ENCODE measurements at regions of chr5 and their contacts with region 1.

Region 1: DNA sequence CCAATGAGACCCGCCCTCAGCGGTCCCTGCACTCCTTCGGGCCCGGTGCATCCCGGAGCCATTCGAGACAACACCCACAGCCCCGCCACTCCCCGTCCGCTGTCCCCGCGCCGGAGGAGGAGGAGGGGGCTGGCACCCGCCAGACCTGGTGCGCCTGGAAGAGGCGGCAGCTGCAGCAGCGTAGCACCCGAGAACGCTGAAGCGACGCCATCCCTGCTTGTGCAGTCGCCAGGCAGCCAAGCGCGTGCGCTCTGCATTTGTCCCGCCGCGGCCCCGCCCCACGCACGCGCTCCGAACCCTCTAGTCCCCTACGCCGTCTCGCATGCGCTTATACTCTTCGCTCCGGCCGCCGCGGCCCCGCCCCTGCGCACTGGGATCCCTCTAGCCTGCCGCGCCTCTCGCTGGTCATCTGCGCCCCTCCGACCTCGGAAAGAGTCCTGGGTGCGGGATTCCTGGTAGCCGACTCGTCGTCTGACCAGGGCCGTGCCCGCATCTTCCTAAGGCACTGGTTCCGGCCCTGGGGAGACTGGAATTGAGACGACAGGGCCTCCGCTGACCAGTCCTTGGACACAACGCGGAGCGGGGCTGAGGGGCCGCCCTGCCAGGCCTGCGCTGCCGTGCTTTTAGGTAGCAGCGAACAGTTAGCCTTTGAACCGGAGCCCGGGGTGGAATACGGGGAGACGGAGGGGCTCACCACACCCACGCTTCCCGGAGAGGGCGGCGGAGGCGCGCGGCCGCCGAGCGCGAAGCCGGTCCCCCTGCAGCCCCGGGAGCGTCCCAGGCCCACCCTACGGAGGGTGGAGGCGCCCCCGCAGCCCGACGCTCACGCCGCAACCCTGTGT is at the start of gene MRNIP:
- DNase-seq: peak; percentile 97
- H3K4me3 Mint-ChIP-seq: peak within 1 kb of the TSS; percentile 98
- H3K27ac Mint-ChIP-seq: peak within 1 kb of the TSS; percentile 94
- H3K4me1 Mint-ChIP-seq: peaks cover 11% of the 10 kb centered on the region
- H3K27me3 Mint-ChIP-seq: no peaks in the 10 kb centered on the region
- total RNA-seq, gene MRNIP: 27.6 and 27.8 TPM in 2 replicates

Region 2: GRCh38 chr5:179243333-179243732 is 615.5 kb before region 1 on chr5:
- intact Hi-C with region 1: no loop called
- DNase-seq: no peak
- H3K4me3 Mint-ChIP-seq: no peak overlapping the region
- H3K27ac Mint-ChIP-seq: no peak overlapping the region
- H3K4me1 Mint-ChIP-seq: no peaks in the 10 kb centered on the region
- H3K27me3 Mint-ChIP-seq: no peaks in the 10 kb centered on the region

Region 3: DNA sequence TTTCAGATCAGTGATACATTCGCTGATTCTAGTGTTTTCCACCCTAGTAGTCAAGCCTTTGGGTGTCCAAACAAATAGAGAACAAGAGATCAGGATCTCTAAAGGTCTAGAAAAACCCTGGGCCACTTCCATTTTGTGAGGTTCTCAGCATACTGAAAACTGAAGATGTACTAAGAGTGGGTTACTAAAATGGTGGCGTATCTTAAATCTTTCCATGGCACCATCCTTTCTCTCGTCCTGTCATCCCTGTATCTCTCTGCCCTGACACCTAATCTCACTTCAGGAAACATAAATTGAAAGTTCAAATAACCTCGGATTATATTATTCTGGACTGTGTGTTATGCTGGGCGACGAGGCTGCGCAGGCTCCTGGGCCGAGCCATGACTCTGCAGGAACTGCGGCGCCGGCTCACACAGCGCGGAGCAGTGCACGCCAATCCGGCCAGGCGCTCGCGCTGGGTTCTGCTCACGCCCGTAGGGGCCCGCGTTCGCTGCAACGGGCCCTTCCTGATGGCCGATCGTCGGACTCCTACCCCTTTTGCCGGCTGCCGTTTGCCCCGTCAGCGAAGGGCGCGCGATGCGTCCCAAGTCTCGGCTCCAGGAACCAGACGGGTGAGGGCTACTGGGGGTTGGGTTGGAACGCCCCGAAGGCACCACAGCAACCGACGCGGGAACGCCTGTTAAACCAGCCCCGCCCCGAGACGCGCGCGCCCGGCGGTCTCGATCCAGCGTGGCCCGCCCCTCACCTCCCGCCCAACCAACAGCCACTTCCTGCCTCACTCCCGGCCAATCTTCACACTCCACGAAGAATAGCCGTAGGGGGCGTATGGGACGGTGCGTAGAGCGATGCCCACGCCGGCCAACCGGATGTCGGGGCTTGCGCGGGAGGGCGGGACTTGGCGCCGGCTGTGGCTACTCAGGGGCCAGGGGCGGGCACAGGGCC is 160.5 kb before region 1 on chr5:
- intact Hi-C with region 1: loop called (anchors 1 kb)
- DNase-seq: peak; percentile 100
- H3K4me3 Mint-ChIP-seq: peak overlapping the region; percentile 89
- H3K27ac Mint-ChIP-seq: peak overlapping the region; percentile 99
- H3K4me1 Mint-ChIP-seq: peaks cover 27% of the 10 kb centered on the region
- H3K27me3 Mint-ChIP-seq: no peaks in the 10 kb centered on the region

Region 4: GRCh38 chr5:179806250-179807222 is 52.3 kb before region 1 on chr5 and contains the start of gene MGAT4B:
- intact Hi-C with region 1: loop called (anchors 1 kb)
- DNase-seq: peak; percentile 91
- H3K4me3 Mint-ChIP-seq: peak within 1 kb of the TSS; percentile 90
- H3K27ac Mint-ChIP-seq: peak within 1 kb of the TSS; percentile 72
- H3K4me1 Mint-ChIP-seq: peaks cover 32% of the 10 kb centered on the region
- H3K27me3 Mint-ChIP-seq: no peaks in the 10 kb centered on the region
- total RNA-seq, gene MGAT4B: 126 and 134 TPM in 2 replicates

Region 5: DNA sequence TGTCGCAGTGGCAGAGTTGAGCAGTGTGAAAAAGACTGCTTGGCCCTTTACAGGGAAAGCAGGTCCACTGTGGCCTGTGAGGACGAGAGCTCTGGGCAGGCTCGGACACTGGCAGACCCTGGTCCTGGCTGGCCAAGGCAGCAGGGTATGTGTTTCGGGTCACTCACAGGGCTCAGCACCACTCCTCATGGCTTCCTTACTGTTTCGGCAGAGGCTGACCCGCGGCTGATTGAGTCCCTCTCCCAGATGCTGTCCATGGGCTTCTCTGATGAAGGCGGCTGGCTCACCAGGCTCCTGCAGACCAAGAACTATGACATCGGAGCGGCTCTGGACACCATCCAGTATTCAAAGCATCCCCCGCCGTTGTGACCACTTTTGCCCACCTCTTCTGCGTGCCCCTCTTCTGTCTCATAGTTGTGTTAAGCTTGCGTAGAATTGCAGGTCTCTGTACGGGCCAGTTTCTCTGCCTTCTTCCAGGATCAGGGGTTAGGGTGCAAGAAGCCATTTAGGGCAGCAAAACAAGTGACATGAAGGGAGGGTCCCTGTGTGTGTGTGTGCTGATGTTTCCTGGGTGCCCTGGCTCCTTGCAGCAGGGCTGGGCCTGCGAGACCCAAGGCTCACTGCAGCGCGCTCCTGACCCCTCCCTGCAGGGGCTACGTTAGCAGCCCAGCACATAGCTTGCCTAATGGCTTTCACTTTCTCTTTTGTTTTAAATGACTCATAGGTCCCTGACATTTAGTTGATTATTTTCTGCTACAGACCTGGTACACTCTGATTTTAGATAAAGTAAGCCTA is 22.4 kb before region 1 on chr5:
- intact Hi-C with region 1: loop called (anchors 1 kb)
- DNase-seq: peak; percentile 89
- H3K4me3 Mint-ChIP-seq: peak overlapping the region; percentile 61
- H3K27ac Mint-ChIP-seq: peak overlapping the region; percentile 87
- H3K4me1 Mint-ChIP-seq: peaks cover 18% of the 10 kb centered on the region
- H3K27me3 Mint-ChIP-seq: no peaks in the 10 kb centered on the region

Region 6: GRCh38 chr5:180071531-180072255 is 212.9 kb after region 1 on chr5 and contains the start of gene RNF130:
- intact Hi-C with region 1: loop called (anchors 5 kb)
- DNase-seq: peak; percentile 95
- H3K4me3 Mint-ChIP-seq: peak within 1 kb of the TSS; percentile 77
- H3K27ac Mint-ChIP-seq: peak within 1 kb of the TSS; percentile 36
- H3K4me1 Mint-ChIP-seq: peaks cover 9% of the 10 kb centered on the region
- H3K27me3 Mint-ChIP-seq: peaks cover 41% of the 10 kb centered on the region
- total RNA-seq, gene RNF130: 7.3 and 8.9 TPM in 2 replicates

Measured in activated CD4-positive, alpha-beta T cell treated with anti-CD3 and anti-CD28 coated beads, Interleukin-2, amount 10 ng/mL, durations not matched to agents 24 days and 14 days (primary cell).